ENCODE measurements at regions of chr7 and their contacts with region 1.

Region 1: DNA sequence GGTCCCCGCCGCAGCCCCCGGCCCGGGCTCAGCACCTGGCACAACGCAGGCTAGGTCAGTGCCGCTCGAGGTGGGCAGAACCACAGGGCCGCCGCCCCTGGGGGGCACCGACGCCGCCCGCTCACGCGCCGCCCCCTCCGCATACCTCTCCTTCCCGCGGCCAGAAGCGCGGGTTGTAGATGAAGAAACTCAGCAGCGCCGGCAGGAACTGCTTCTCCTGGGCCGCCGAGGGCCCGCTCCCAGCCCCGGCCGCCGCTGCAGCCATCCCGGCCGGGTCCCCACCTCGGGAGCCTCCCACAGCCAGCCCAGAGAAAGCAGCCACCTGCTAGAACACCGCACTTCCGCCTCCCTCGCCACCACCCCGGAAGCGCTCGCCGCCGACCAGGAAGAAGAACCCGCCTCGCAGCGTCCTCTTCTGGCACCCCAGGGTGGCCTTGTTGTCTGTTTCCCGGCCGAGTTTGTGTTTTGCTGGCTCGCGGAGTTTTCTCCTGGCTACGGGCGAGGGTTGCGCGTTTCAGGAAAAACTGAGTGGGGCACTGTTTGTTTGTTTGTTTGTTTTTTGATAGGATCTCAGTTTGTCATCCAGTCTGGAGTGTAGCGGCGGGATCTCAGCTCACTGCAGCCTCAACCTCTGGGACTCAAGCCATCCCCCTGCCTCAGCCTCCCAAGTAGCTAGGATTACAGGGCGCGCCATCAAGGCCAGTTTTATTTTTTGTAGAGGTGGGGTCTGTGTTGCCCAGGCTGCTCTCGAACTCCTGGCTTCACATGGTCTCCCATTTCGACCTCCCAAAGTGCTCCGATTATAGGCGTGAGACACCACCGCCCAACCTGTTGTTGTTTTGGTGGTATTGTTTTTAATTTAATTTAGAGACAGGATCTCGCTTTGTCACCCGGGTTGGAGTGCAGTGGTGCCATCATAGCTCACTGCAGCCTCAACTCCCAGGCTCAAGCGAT is 17.7 kb downstream of the OCM2 start:
- DNase-seq: peak; percentile 87 to 89
- H3K4me3 ChIP-seq: peak overlapping the region; percentile 82
- H3K4me3 Mint-ChIP-seq: peak overlapping the region; percentile 96
- H3K27ac Mint-ChIP-seq: peak overlapping the region; percentile 88
- H3K4me1 ChIP-seq: no peaks in the 10 kb centered on the region
- H3K4me1 Mint-ChIP-seq: peaks cover 7% of the 10 kb centered on the region
- H3K27me3 ChIP-seq: no peaks in the 10 kb centered on the region
- H3K27me3 Mint-ChIP-seq: no peaks in the 10 kb centered on the region
- CTCF ChIP-seq: peak; percentile 27 to 75

Region 2: DNA sequence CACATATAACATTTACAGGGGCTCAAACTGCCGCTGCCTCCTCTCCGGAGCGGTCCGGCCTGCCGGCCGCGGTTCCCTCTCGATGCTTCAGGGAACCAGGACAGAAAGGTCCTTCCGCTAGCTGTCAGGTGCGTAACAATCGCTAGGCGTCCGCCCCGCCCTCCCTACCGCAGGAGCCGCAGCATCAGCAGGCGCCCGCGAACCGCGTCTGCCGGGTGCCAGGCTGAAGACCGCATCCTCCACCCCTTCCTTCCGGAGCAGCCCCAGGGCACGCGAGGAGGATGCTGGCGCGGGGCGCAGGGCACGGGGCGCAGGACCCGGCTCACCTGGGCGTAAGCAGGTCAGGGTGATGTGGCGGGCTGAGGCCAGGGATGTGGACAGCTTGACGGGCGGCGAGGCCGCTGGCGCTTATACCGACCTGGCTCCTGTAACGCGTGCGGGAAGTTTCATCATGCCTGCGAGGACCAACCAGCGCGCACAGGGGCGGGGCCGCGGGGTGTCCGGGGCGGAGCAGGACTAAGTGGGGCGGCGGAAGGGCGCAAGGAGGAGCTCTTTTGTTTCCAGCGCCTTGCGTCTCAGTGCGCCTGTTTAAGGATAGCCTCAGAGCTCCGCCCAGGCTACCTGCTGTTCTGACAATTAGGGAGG is 100.1 kb before region 1 on chr7 and contains the start of gene ASNS:
- CTCF ChIA-PET with region 1: no interaction called
- POLR2A ChIA-PET with region 1: interaction called, 3 read pairs
- intact Hi-C with region 1: loop called (anchors 2 kb)
- DNase-seq: peak; percentile 96 to 98
- H3K4me3 ChIP-seq: peak within 1 kb of the TSS; percentile 97
- H3K4me3 Mint-ChIP-seq: peak within 1 kb of the TSS; percentile 91
- H3K27ac Mint-ChIP-seq: peak within 1 kb of the TSS; percentile 92
- H3K4me1 ChIP-seq: no peaks in the 10 kb centered on the region
- H3K4me1 Mint-ChIP-seq: peaks cover 6% of the 10 kb centered on the region
- H3K27me3 ChIP-seq: no peaks in the 10 kb centered on the region
- H3K27me3 Mint-ChIP-seq: no peaks in the 10 kb centered on the region
- CTCF ChIP-seq: no peak
- total RNA-seq, gene ASNS: 295 and 374 TPM in 2 replicates

Region 3: DNA sequence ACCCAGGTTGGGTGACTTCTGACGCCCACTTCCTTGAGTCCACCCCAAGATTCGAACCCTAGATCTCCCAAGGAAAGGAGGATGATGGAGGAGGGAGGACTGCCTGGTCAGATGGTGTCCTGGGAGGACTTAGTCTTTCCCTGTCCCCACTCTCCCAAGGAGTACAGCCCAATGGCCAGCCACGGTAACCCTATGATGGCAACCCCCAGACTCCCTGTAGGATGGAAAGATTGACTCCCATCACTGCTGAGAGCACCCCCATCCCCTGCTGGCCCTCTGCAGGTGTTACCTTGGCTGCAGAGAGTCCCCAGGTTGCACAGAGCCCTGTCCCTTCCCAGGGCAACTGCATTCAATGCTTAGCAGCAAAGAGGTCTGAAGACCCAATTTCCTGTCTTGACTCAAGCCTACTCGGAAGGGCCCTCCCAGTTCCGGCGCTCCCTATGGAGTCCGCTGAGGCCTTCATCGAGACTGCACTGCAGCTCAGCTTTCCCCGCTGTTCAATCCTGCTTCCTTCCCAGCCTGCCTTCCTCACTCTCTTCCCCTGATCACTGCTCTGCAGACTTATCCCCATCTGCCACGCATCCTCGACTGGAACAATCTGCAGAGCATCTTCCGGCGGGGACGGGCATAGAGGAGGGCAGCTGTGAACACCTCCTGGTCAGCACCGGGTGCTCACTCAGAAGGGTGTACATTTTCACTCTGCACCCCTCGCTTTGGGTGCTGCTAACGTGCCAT is 68.5 kb after region 1 on chr7:
- CTCF ChIA-PET with region 1: no interaction called
- POLR2A ChIA-PET with region 1: no interaction called
- intact Hi-C with region 1: no loop called
- DNase-seq: no peak
- H3K4me3 ChIP-seq: no peak overlapping the region
- H3K4me3 Mint-ChIP-seq: no peak overlapping the region
- H3K27ac Mint-ChIP-seq: no peak overlapping the region
- H3K4me1 ChIP-seq: no peaks in the 10 kb centered on the region
- H3K4me1 Mint-ChIP-seq: no peaks in the 10 kb centered on the region
- H3K27me3 ChIP-seq: no peaks in the 10 kb centered on the region
- H3K27me3 Mint-ChIP-seq: peaks cover 3% of the 10 kb centered on the region
- CTCF ChIP-seq: no peak

Region 4: DNA sequence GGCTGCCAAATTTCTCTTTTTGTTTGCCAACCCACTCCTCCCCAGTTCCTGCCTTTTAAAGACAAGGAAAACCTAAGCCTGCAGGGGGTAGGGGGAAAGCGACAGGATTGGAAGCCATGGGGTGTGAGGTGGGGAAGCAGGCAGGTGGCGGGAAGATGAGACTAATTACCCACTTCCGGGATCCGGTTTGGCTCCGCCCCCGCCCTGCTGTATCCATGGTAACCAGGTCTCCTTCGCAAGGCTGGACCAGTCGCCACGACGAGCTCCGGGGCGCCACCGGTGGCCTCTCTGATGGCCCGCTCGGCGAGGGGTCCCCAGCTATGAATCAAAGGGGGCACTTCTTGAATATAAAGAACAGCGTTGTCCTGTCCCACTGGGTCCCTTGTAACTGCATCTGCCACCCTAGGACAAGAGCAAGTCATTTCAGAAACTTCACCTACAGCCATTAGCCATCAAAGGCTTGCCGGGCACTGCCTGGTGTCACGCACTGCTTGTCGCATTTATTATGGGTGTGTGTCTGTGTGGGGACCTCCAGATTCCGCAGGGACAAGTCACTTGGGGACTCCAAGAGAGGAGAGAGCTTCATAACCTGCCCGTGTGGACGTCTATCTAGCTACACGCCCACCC is 79.0 kb after region 1 on chr7:
- CTCF ChIA-PET with region 1: interaction called, 11 read pairs
- POLR2A ChIA-PET with region 1: no interaction called
- intact Hi-C with region 1: no loop called
- DNase-seq: peak; percentile 78
- H3K4me3 ChIP-seq: no peak overlapping the region
- H3K4me3 Mint-ChIP-seq: no peak overlapping the region
- H3K27ac Mint-ChIP-seq: no peak overlapping the region
- H3K4me1 ChIP-seq: peaks cover 13% of the 10 kb centered on the region; the same call in 1 of the 2 replicates
- H3K4me1 Mint-ChIP-seq: no peaks in the 10 kb centered on the region
- H3K27me3 ChIP-seq: no peaks in the 10 kb centered on the region
- H3K27me3 Mint-ChIP-seq: no peaks in the 10 kb centered on the region
- CTCF ChIP-seq: peak in 1 of 2 experiments; percentile 18

Region 5: DNA sequence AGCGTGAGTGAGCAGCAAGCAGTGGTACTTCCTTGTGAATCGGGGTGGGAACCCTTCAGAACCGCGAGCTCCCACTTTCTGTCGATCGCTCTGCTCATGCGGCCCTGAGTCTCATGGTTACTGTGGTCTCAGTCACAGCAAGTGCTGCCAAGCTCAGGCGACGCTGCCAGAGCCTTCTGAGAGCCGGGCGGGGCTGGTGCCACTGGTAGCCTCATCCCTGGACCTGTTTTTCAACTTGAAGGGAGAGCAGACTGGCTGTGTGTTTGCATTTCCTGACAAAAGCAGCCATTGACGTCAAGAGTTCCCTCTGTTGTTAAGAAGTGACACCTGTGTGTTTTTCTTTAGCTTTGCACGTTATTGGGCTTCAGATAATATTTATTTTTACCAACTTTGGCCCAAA is 206.1 kb after region 1 on chr7:
- CTCF ChIA-PET with region 1: no interaction called
- POLR2A ChIA-PET with region 1: no interaction called
- intact Hi-C with region 1: no loop called
- DNase-seq: no peak
- H3K4me3 ChIP-seq: no peak overlapping the region
- H3K4me3 Mint-ChIP-seq: no peak overlapping the region
- H3K27ac Mint-ChIP-seq: no peak overlapping the region
- H3K4me1 ChIP-seq: no peaks in the 10 kb centered on the region
- H3K4me1 Mint-ChIP-seq: peaks cover 7% of the 10 kb centered on the region
- H3K27me3 ChIP-seq: no peaks in the 10 kb centered on the region
- H3K27me3 Mint-ChIP-seq: no peaks in the 10 kb centered on the region
- CTCF ChIP-seq: no peak